H1 (cell line): ENCODE measurements at regions of chr9 and their contacts with region 1.

Region 1: GRCh38 chr9:38707885-38708637 is 11.9 kb downstream of the FAM240B start:
- DNase-seq: no peak
- H3K4me3 ChIP-seq: no peak overlapping the region
- H3K27ac ChIP-seq: no peak overlapping the region
- H3K4me1 ChIP-seq: no peaks in the 10 kb centered on the region
- H3K27me3 ChIP-seq: no peaks in the 10 kb centered on the region; a peak in 1 of 7 replicates
- CTCF ChIP-seq: peak; percentile 50 to 90 (median 59)
- EP300 ChIP-seq: no peak
- POLR2A ChIP-seq: no peak
- RAD21 ChIP-seq: peak; percentile 75 to 83

Region 2: GRCh38 chr9:38380872-38381534 is 327.1 kb before region 1 on chr9:
- CTCF ChIA-PET with region 1: no interaction called
- POLR2A ChIA-PET with region 1: no interaction called
- DNase-seq: peak; percentile 29 to 61
- H3K4me3 ChIP-seq: peak overlapping the region in 1 of 4 experiments; percentile 3; a peak in 1 of 8 replicates
- H3K27ac ChIP-seq: no peak overlapping the region
- H3K4me1 ChIP-seq: peaks cover 8 to 17% (median 13%) of the 10 kb centered on the region in 4 experiments
- H3K27me3 ChIP-seq: peaks cover 5 to 29% (median 25%) of the 10 kb centered on the region in 4 experiments
- CTCF ChIP-seq: no peak
- EP300 ChIP-seq: peak in 1 of 2 experiments; percentile 52; a peak in 1 of 3 replicates
- POLR2A ChIP-seq: no peak
- RAD21 ChIP-seq: no peak

Region 3: DNA sequence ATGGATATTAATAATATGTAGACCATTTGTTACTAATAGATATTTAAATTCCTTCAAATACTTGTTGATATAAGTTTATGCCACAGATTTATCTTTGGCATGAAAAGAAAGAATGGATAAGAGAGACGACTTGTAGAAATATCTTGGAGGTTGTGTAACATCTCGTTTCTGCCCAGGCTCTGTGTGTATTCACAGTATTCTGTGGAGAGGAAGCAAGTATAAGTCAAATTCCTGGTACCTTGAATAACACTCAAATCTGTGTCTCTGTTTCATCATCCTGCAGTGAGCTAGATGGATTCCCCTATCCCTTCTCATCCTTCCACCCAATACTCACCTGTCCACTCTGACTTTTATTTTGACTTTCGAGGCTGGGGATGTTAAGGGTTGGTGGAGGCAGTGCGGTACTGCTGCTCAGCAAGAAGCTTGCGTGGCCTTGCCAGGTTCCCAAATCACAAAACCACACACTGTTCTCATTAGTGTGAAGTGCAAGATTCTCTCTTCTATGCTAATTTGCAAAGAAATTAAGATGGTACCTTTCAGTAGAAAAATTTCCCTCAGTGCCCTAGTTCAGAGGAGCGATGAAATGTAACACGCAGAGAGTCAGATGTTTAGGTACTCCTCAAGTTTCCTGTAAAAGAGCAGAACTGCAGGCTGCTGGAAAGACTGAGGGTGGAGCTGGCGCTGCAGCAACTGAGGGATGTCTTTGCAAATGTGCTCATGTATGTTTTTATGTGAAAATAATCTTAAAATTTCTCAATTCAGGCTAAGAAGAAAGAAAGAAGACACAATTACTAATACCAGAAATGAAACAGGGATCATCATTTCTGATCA is 45.1 kb before region 1 on chr9:
- CTCF ChIA-PET with region 1: interaction called, 21 read pairs
- POLR2A ChIA-PET with region 1: no interaction called
- DNase-seq: no peak
- H3K4me3 ChIP-seq: no peak overlapping the region
- H3K27ac ChIP-seq: no peak overlapping the region
- H3K4me1 ChIP-seq: no peaks in the 10 kb centered on the region
- H3K27me3 ChIP-seq: no peaks in the 10 kb centered on the region
- CTCF ChIP-seq: peak; percentile 63 to 67 (median 64)
- EP300 ChIP-seq: no peak
- POLR2A ChIP-seq: no peak
- RAD21 ChIP-seq: peak; percentile 85 to 87

Region 4: GRCh38 chr9:38671748-38672147 is 36.3 kb before region 1 on chr9:
- CTCF ChIA-PET with region 1: interaction called, 15 read pairs
- POLR2A ChIA-PET with region 1: no interaction called
- DNase-seq: no peak
- H3K4me3 ChIP-seq: peak overlapping the region in 1 of 4 experiments; percentile 23; a peak in 1 of 8 replicates
- H3K27ac ChIP-seq: no peak overlapping the region
- H3K4me1 ChIP-seq: peaks cover 5 to 10% (median 7%) of the 10 kb centered on the region in 4 experiments; a peak in 5 of 7 replicates
- H3K27me3 ChIP-seq: no peaks in the 10 kb centered on the region
- CTCF ChIP-seq: no peak
- EP300 ChIP-seq: no peak
- POLR2A ChIP-seq: no peak
- RAD21 ChIP-seq: no peak

Region 5: DNA sequence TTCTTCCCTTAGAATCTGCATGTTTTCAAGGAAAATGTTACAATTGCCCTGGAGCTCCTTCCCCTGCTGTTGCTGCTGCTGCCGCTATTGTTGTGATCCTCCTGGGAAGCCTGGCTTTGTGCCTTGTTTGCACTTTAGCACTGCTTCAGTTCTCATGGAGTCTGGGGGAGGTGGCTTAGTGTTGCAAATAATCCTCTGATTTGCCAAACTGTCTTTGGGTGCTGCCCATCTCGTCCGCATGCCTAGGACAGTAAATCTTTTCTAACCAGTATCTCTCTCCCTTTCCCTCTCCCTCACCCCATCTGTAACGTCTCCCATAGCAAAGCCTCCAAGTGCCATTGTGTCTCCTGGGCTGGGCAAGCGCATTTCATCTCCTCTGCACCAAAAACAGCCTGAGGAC is 18.4 kb before region 1 on chr9:
- CTCF ChIA-PET with region 1: interaction called, 34 read pairs
- POLR2A ChIA-PET with region 1: interaction called, 3 read pairs
- DNase-seq: peak; percentile 59 to 75
- H3K4me3 ChIP-seq: 0 out of 8 replicates have a peak overlapping the region, but pooled peaks of 1 of the 4 experiments have one; percentile 3
- H3K27ac ChIP-seq: no peak overlapping the region
- H3K4me1 ChIP-seq: peaks cover 7 to 36% (median 24%) of the 10 kb centered on the region in 4 experiments
- H3K27me3 ChIP-seq: 0 out of 7 replicates have a peak, but pooled peaks cover 0 to 3% (median 1%) of the 10 kb centered on the region in 4 experiments
- CTCF ChIP-seq: no peak
- EP300 ChIP-seq: no peak
- POLR2A ChIP-seq: no peak
- RAD21 ChIP-seq: no peak

Region 6: GRCh38 chr9:38720083-38720745 is 12.2 kb after region 1 on chr9 and contains the start of gene FAM240B:
- CTCF ChIA-PET with region 1: interaction called, 19 read pairs
- POLR2A ChIA-PET with region 1: no interaction called
- DNase-seq: no peak
- H3K4me3 ChIP-seq: no peak within 1 kb of the TSS
- H3K27ac ChIP-seq: no peak within 1 kb of the TSS
- H3K4me1 ChIP-seq: peaks cover 0 to 2% (median 0%) of the 10 kb centered on the region in 4 experiments; a peak in 1 of 7 replicates
- H3K27me3 ChIP-seq: no peaks in the 10 kb centered on the region
- CTCF ChIP-seq: no peak
- EP300 ChIP-seq: no peak
- POLR2A ChIP-seq: no peak
- RAD21 ChIP-seq: no peak
- total RNA-seq, gene FAM240B: not detected in 2 replicates